ENCODE measurements at regions of chr1 and their contacts with region 1.

Region 1: GRCh38 chr1:34460193-34460592 is 283.5 kb downstream of the C1orf94 start:
- DNase-seq: peak; percentile 42 to 66 (median 55)
- H3K4me3 ChIP-seq: no peak overlapping the region
- H3K27ac ChIP-seq: no peak overlapping the region
- H3K4me1 ChIP-seq: no peaks in the 10 kb centered on the region
- H3K27me3 ChIP-seq: no peaks in the 10 kb centered on the region

Region 2: DNA sequence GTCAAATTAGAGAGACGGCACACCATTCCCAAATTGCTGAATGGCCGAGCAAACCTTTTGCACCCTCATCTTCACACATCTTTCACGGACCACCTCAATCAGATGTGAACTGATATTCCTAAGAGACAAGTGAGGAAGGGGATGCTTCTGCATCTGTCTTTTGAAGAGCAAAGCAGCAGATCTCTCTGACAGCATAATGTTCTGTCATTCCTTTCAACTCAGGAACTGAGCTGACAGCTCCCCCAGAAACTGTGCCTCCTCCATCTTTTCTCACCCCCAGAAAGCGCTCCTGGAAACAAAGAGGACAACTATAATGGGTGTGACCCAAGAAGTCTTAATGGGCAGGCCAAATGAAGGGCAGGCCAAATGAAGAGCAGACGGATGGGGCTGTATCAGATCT is 27.1 kb before region 1 on chr1:
- CTCF ChIA-PET with region 1: no interaction called
- POLR2A ChIA-PET with region 1: no interaction called
- DNase-seq: no peak
- H3K4me3 ChIP-seq: no peak overlapping the region
- H3K27ac ChIP-seq: no peak overlapping the region
- H3K4me1 ChIP-seq: no peaks in the 10 kb centered on the region
- H3K27me3 ChIP-seq: peaks cover 0 to 12% (median 5%) of the 10 kb centered on the region in 5 experiments

Region 3: DNA sequence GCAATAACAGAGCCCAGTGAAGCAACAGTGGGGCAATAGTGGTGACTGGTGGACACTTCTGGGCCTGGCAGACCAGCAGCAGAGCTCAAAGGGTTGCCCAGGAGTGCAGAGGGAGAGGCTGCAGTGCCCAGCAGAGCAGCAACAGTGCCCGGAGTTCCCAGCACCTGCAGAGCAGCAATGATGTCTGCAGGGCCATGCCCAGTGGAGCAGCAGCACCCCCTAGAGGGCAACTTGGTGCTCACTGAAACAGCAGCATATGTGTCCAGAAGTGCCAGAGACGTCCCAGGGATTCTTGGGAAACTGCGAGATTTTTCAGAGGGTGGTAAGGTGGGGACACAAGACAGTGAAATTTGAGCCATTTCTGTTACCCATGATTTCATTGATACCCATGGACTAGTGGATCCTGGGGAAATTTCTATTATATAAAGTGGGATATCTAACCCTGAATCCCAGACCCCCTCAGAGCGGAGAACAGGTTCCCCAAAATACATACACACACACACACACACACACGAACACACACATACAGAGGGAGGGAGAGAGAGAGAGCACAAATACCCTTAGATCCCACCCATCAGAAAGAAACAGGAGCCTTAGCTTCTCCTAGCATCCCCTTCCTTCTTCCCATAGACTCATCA is 137.8 kb after region 1 on chr1:
- CTCF ChIA-PET with region 1: interaction called, 19 read pairs
- POLR2A ChIA-PET with region 1: no interaction called
- DNase-seq: peak; percentile 38 to 71 (median 58)
- H3K4me3 ChIP-seq: no peak overlapping the region
- H3K27ac ChIP-seq: no peak overlapping the region
- H3K4me1 ChIP-seq: no peaks in the 10 kb centered on the region
- H3K27me3 ChIP-seq: peaks cover 0 to 23% (median 3%) of the 10 kb centered on the region in 5 experiments